Activated T-helper 1 cell treated with anti-CD3 and anti-CD28 coated beads, Interleukin-12 subunit alpha, Interleukin-12 subunit beta, Interleukin-2, Interleukin-4 antibody, amounts not matched to agents 30 ng/mL and 10 ng/mL and 1 ng/mL, durations not matched to agents 14 hours and 24 hours and 36 hours (primary cell): ENCODE measurements at regions of chr6 and their contacts with region 1.

Region 1: DNA sequence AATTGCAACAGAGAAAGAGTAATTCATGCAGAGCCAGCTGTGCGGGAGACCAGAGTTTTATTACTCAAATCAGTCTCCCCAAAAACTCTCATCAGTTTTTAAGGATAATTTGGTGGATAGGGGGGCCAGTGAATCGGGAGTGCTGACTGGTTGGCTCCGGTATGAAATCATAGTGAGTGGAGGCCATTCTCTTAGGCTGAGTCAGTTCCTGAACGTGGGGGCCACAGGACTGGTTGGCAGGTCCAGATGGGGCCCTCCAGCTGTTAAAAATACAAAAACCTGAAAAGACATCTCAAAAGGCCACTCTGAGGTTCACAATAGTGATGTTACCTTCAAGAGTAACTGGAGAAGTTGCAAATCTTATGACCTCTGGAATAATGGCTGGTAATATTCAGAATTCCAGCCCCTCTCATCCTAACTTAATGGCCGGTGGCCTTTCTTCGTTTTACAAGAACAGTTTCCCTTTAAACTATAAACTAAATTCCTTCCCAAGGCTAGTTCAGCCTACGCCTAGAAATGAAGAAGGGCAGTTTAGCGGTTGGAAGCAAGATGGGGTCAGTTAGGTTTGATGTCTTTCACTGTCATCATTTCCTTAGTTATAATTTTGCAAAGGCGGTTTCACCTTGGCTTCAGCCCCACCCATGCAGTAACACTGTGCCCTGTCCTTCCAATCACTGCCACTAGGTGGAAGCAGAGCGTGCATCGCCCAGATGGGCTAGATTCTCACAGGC is 6.8 kb upstream of the MICA start:
- DNase-seq: peak; percentile 81
- H3K4me3 Mint-ChIP-seq: no peak overlapping the region
- H3K27ac Mint-ChIP-seq: peak overlapping the region; percentile 42
- H3K4me1 Mint-ChIP-seq: peaks cover 21% of the 10 kb centered on the region
- H3K27me3 Mint-ChIP-seq: peaks cover 2% of the 10 kb centered on the region

Region 2: GRCh38 chr6:31441365-31442267 is 45.0 kb after region 1 on chr6:
- intact Hi-C with region 1: loop called (anchors 1 kb)
- DNase-seq: peak; percentile 71
- H3K4me3 Mint-ChIP-seq: no peak overlapping the region
- H3K27ac Mint-ChIP-seq: no peak overlapping the region
- H3K4me1 Mint-ChIP-seq: peaks cover 7% of the 10 kb centered on the region
- H3K27me3 Mint-ChIP-seq: peaks cover 35% of the 10 kb centered on the region